Activated B cell treated with CpG ODN at 0.5 μM for 24 hours (primary cell): ENCODE measurements at regions of chr2 and their contacts with region 1.

Region 1: DNA sequence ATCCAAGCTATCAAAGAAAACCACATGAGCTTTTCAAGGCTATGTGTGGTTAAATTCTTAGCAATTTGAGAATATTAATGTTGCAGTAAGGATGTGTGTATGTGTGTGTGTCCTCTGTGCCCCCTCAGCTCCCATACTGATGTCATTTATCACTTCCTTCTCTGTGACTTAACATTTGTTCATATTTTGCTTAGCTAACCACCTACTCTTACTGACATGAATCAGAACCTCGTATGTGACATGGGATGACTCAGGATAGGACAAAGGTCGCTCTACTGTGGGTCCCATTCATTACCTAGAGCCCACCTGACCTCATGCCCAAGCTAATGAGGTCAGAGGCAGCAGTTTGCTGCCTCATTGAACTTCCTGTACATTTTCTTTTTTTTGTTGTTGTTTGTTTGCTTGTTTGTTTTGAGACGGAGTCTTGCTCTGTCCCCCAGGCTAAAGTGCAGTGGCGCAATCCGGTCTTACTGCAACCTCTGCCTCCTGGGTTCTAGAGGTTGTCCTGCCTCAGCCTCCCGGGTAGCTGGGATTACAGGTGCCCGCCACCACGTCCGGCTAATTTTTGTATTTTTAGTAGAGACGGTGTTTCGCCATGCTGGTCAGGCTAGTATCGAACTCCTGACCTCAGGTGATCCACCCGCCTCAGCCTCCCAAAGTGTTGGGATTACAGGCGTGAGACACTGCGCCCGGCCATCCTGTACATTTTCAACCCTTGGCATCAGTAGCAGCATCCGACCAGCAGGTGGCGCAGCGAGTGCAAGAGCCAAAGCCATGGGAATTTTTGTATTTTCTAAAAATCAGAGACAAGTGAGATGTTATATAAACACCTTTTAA is 36.4 kb downstream of the MOGAT1 start:
- DNase-seq: peak; percentile 66
- ATAC-seq: peak; percentile 72
- H3K4me3 Mint-ChIP-seq: no peak overlapping the region
- H3K27ac Mint-ChIP-seq: no peak overlapping the region
- H3K4me1 Mint-ChIP-seq: peaks cover 9% of the 10 kb centered on the region
- H3K27me3 Mint-ChIP-seq: peaks cover 17% of the 10 kb centered on the region
- CTCF ChIP-seq: no peak

Region 2: GRCh38 chr2:221590861-221591365 is 1117.0 kb before region 1 on chr2:
- CTCF ChIA-PET with region 1: no interaction called
- POLR2A ChIA-PET with region 1: no interaction called
- intact Hi-C with region 1: no loop called
- DNase-seq: no peak
- ATAC-seq: no peak
- H3K4me3 Mint-ChIP-seq: no peak overlapping the region
- H3K27ac Mint-ChIP-seq: no peak overlapping the region
- H3K4me1 Mint-ChIP-seq: no peaks in the 10 kb centered on the region
- H3K27me3 Mint-ChIP-seq: peaks cover 20% of the 10 kb centered on the region
- CTCF ChIP-seq: no peak

Region 3: DNA sequence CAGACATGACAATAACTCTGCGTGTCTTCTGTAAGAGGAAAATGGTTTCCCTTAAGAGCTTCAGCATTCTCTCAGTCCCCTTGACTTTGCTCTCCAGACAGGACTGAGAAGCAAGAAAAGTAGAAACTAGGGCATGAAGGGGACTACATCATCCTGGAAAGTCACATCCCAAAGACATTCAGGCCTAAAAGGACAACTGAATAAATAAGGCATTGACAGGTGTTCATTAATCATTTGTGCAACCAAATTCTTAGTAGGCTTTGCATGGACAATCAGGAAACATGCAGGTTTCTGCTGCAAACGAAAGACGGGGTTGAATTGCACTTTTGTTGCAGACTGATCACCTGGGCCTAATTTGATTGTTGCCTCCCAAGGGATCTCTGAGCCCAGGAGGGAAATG is 284.7 kb before region 1 on chr2:
- CTCF ChIA-PET with region 1: no interaction called
- POLR2A ChIA-PET with region 1: no interaction called
- intact Hi-C with region 1: no loop called
- DNase-seq: no peak
- ATAC-seq: no peak
- H3K4me3 Mint-ChIP-seq: peak overlapping the region; percentile 96
- H3K27ac Mint-ChIP-seq: peak overlapping the region; percentile 93
- H3K4me1 Mint-ChIP-seq: peaks cover 46% of the 10 kb centered on the region
- H3K27me3 Mint-ChIP-seq: peaks cover 23% of the 10 kb centered on the region
- CTCF ChIP-seq: no peak

Region 4: GRCh38 chr2:222655787-222656525 is 52.0 kb before region 1 on chr2 and contains the start of gene FARSB:
- CTCF ChIA-PET with region 1: no interaction called
- POLR2A ChIA-PET with region 1: interaction called, 10 read pairs
- intact Hi-C with region 1: no loop called
- DNase-seq: peak; percentile 81
- ATAC-seq: peak; percentile 93
- H3K4me3 Mint-ChIP-seq: peak within 1 kb of the TSS; percentile 97
- H3K27ac Mint-ChIP-seq: peak within 1 kb of the TSS; percentile 99
- H3K4me1 Mint-ChIP-seq: peaks cover 47% of the 10 kb centered on the region
- H3K27me3 Mint-ChIP-seq: no peaks in the 10 kb centered on the region
- CTCF ChIP-seq: no peak
- total RNA-seq, gene FARSB: 21.6 and 23.3 TPM in 2 replicates

Region 5: GRCh38 chr2:222690564-222691200 is 17.2 kb before region 1 on chr2:
- CTCF ChIA-PET with region 1: interaction called, 10 read pairs
- POLR2A ChIA-PET with region 1: no interaction called
- intact Hi-C with region 1: loop called (anchors 2 kb)
- DNase-seq: peak; percentile 50
- ATAC-seq: peak; percentile 99
- H3K4me3 Mint-ChIP-seq: no peak overlapping the region
- H3K27ac Mint-ChIP-seq: no peak overlapping the region
- H3K4me1 Mint-ChIP-seq: peaks cover 4% of the 10 kb centered on the region
- H3K27me3 Mint-ChIP-seq: peaks cover 10% of the 10 kb centered on the region
- CTCF ChIP-seq: peak; percentile 94

Region 6: DNA sequence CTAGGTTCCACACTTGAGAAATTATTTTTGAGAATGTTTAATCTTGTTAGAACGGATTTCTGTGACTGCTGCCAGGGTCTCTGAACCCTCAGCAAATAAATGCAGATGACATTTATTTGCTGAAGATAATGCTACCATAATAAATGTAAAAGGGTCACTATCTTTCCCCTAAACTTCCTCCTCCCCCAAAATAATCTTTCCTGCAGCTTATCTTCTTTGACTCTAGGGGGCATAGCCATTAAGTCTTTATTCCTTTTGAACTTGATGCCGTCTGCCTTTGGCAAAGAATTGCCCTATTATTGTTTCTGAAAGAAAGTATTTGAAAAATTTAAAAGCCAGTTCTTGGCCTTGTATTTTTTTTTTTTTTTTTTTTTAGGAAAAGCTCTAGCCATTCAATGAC is 89.4 kb after region 1 on chr2:
- CTCF ChIA-PET with region 1: no interaction called
- POLR2A ChIA-PET with region 1: no interaction called
- intact Hi-C with region 1: loop called (anchors 5 kb)
- DNase-seq: no peak
- ATAC-seq: no peak
- H3K4me3 Mint-ChIP-seq: no peak overlapping the region
- H3K27ac Mint-ChIP-seq: no peak overlapping the region
- H3K4me1 Mint-ChIP-seq: no peaks in the 10 kb centered on the region
- H3K27me3 Mint-ChIP-seq: no peaks in the 10 kb centered on the region
- CTCF ChIP-seq: no peak

Region 7: DNA sequence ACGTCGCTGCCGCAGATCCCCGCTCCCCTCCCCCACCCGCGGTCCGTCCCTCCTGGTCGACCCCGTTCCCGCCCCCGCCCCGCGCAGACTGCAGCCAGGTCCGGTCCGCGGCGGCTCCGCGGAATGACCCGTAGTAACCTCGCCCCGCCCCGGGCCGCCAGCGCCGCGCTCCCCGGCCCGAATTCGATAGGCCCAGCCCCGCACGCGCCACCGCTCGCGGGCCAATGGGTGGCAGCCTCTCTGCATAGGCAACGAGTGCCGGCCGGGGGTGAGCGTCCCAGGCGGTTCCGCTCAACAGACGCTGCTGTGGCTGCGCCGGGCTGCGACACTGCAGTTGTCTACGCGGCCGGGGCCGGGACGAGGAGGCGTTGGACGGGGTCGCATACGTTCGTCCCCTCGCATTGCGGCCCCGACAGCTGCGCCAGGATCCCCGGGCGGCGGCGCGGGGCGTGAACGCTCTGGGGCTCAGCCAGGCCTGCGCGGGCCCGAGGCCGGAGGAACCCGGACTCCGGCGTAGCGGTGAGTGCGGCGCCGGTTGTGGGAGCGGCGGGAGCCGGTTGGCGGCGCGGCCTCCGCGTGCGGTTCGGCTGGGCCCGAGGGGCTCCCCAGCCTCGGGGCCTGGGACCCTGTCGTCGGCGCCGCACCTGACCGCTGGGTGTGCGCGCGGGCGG is 153.0 kb after region 1 on chr2 and contains the start of gene ACSL3:
- CTCF ChIA-PET with region 1: interaction called, 4 read pairs
- POLR2A ChIA-PET with region 1: no interaction called
- intact Hi-C with region 1: loop called (anchors 1 kb)
- DNase-seq: peak; percentile 90
- ATAC-seq: peak; percentile 97
- H3K4me3 Mint-ChIP-seq: peak within 1 kb of the TSS; percentile 81
- H3K27ac Mint-ChIP-seq: peak within 1 kb of the TSS; percentile 87
- H3K4me1 Mint-ChIP-seq: peaks cover 7% of the 10 kb centered on the region
- H3K27me3 Mint-ChIP-seq: no peaks in the 10 kb centered on the region
- CTCF ChIP-seq: no peak
- total RNA-seq, gene ACSL3: 40.6 and 41.2 TPM in 2 replicates

Region 8: GRCh38 chr2:222903234-222904220 is 195.6 kb after region 1 on chr2:
- CTCF ChIA-PET with region 1: interaction called, 94 read pairs
- POLR2A ChIA-PET with region 1: no interaction called
- intact Hi-C with region 1: loop called (anchors 1 kb)
- DNase-seq: no peak
- ATAC-seq: peak; percentile 69
- H3K4me3 Mint-ChIP-seq: no peak overlapping the region
- H3K27ac Mint-ChIP-seq: no peak overlapping the region
- H3K4me1 Mint-ChIP-seq: peaks cover 9% of the 10 kb centered on the region
- H3K27me3 Mint-ChIP-seq: no peaks in the 10 kb centered on the region
- CTCF ChIP-seq: no peak

Region 9: DNA sequence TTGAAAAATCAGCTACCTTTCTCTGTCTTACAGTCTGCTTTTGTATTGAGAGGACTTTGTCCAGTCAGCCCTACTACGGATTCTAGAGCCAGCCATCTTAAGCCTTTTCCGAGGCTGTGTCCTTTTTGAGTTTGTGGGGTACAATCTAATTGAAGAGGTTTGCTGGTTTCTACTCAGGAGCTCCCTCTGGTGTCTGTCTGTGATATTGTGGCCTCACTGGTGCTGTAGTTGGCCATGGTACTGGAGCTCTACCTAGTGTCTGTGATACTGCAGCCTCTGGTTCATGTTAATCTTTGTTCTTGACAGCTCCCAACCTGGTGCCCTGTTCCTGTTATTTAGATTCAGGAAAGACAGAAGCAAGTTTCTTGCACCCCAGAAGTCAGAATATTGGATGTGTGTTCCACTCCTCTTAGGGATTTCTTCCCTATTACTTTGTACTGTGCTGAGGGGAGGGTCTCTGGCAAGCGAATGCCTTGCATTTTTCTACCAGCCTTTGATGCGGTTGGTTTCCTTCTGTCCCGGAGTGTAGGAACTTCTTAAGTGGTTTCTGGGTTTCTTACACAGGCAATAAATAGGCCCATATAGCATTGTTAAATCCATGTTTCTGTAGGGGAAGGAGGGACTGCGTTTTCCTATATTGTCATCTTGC is 231.4 kb after region 1 on chr2:
- CTCF ChIA-PET with region 1: interaction called, 40 read pairs
- POLR2A ChIA-PET with region 1: no interaction called
- intact Hi-C with region 1: loop called (anchors 1 kb)
- DNase-seq: peak; percentile 18
- ATAC-seq: peak; percentile 81
- H3K4me3 Mint-ChIP-seq: no peak overlapping the region
- H3K27ac Mint-ChIP-seq: no peak overlapping the region
- H3K4me1 Mint-ChIP-seq: no peaks in the 10 kb centered on the region
- H3K27me3 Mint-ChIP-seq: no peaks in the 10 kb centered on the region
- CTCF ChIP-seq: no peak